Activated CD4-positive, alpha-beta T cell treated with anti-CD3 and anti-CD28 coated beads, Interleukin-2, amount 10 ng/mL, durations not matched to agents 24 days and 14 days (primary cell): ENCODE measurements at regions of chr7 and their contacts with region 1.

Region 1: DNA sequence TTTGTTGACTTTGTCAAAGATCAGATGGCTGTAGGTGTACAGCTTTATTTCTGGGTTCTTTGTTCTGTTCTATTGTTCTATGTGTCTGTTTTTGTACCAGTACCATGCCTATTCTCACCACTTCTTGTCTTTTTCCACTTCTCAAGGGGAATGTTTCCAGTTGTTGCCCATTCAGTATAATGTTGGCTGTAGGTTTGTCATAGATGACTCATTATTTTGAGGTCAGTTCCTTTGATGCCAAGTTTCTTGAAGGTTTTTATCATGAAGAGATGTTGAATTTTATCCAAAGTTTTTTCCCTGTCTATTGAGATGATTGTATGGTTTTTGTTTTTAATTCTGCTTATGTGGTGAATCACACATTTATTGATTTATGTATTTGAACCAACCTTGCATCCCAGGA is 216.7 kb upstream of the RNF32 start:
- DNase-seq: no peak
- H3K4me3 Mint-ChIP-seq: no peak overlapping the region
- H3K27ac Mint-ChIP-seq: no peak overlapping the region
- H3K4me1 Mint-ChIP-seq: no peaks in the 10 kb centered on the region
- H3K27me3 Mint-ChIP-seq: peaks cover 20% of the 10 kb centered on the region

Region 2: DNA sequence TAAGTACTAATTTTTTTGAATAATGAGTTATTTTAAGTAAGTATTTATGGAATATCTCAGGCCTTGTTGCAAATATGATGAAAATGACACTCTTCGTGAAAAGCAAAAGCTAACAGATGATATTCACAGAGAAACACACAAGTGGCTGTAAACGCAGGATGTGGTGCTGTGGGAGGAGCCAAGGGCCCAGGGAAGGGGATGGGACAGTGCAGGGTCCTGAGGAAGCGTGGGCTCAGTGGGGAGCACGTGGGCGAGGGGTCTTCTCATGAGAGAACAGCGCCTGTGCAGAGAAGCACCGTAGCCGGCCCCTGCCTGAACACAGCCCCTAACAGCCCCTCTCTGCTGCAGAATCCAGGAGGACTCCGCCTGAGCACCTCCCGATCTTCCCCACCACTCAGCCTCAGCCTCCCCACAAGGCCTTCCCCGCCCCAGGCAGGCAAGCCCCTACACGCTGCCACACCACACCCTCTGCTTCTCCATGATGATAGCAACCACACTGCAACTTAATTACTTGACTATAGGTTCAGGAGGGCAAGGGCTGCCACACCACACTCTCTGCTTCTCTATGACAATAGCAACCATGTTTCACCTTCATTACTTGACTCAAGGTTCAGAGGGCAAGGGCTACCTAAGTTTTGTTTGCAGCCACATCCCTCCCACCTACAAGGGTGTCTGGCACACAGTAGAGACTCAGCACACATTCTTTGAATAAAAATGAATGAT is 64.1 kb after region 1 on chr7:
- intact Hi-C with region 1: loop called (anchors 10 kb)
- DNase-seq: no peak
- H3K4me3 Mint-ChIP-seq: no peak overlapping the region
- H3K27ac Mint-ChIP-seq: no peak overlapping the region
- H3K4me1 Mint-ChIP-seq: no peaks in the 10 kb centered on the region
- H3K27me3 Mint-ChIP-seq: peaks cover 13% of the 10 kb centered on the region

Region 3: DNA sequence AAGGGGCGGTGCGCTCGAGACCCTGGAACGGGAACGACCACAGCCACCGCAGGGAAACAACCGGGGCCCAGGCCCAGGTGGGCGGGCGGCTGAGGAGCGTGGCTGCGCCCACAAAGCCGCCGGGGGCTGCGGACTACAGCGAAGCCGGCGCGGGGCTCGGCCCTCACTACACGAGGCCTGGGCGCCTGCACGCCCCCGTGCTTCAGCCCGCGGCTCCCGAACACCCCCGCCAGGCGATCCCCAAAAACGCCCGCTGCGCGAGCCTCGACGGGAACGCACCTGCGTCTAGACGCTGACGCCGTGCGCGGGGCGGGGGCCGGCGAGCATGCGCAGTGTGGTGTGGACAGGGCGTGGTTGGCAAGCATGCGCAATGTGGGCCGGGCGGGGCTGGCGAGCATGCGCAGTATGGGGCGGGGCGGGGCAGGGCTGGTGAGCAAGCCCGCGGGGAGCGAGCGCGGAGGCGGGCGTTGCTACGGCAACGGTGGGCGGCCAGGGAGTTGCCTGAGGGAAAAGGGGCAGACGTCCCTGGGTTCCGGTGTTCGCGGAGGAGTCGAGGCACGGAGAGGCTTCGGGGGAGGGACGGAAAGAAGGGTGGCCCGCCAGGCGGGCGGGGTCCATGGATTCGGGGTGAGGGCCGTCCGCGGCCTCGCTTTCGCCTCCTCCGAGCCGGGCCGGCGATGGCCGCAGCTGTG is 216.5 kb after region 1 on chr7 and contains the start of gene RNF32:
- intact Hi-C with region 1: no loop called
- DNase-seq: peak; percentile 99
- H3K4me3 Mint-ChIP-seq: peak within 1 kb of the TSS; percentile 97
- H3K27ac Mint-ChIP-seq: peak within 1 kb of the TSS; percentile 99
- H3K4me1 Mint-ChIP-seq: peaks cover 41% of the 10 kb centered on the region
- H3K27me3 Mint-ChIP-seq: peaks cover 11% of the 10 kb centered on the region
- total RNA-seq, gene RNF32: 2.3 and 2.4 TPM in 2 replicates